OCI-LY7 (cell line): ENCODE measurements at regions of chr3 and their contacts with region 1.

Region 1: GRCh38 chr3:4021162-4021561 is 221.9 kb downstream of the LRRN1 start:
- DNase-seq: no peak
- H3K4me3 ChIP-seq: no peak overlapping the region
- H3K27ac ChIP-seq: no peak overlapping the region
- H3K4me1 ChIP-seq: no peaks in the 10 kb centered on the region
- CTCF ChIP-seq: no peak

Region 2: GRCh38 chr3:4271834-4272233 is 250.7 kb after region 1 on chr3:
- CTCF ChIA-PET with region 1: no interaction called
- POLR2A ChIA-PET with region 1: no interaction called
- intact Hi-C with region 1: loop called (anchors 10 kb)
- DNase-seq: peak; percentile 12
- H3K4me3 ChIP-seq: no peak overlapping the region
- H3K27ac ChIP-seq: no peak overlapping the region
- H3K4me1 ChIP-seq: no peaks in the 10 kb centered on the region
- CTCF ChIP-seq: peak; percentile 73